AG04449 (cell line): ENCODE measurements at regions of chr1 and their contacts with region 1.

Region 1: DNA sequence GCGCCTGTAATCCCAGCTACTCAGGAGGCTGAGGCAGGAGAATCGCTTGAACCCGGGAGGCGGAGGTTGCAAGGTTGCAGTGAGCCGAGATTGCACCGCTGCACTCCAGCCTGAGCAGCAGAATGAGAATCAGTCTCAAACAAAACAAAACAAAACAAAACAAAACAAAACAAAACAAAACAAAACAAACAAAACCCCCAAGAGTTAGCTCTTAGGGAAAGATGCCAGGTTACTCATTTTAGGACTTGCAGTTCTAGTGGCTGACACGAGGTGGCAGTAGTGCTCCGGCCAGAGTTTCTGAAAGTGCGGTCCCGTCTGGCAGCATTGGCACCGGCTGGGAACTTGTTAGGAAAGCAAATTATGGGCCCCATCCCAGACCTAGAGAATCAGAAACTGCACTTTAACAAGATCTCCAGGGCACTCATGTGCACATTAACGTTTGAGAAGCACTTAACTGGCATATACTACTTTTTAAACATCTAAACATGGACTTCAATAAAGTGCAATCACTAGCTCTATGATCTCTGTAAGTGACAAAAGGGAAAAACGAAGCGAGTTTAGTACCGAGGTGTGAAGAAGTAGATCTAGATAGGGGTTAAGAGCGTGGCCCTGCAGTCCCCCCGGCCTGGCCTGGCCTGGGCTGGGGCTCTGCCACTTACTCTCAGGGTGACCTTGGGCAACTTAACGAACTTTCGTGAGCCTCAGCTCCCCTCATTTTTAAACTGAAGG is 41.9 kb upstream of the TNFRSF1B start:
- DNase-seq: no peak
- H3K4me3 ChIP-seq: no peak overlapping the region
- CTCF ChIP-seq: peak; percentile 84

Region 2: DNA sequence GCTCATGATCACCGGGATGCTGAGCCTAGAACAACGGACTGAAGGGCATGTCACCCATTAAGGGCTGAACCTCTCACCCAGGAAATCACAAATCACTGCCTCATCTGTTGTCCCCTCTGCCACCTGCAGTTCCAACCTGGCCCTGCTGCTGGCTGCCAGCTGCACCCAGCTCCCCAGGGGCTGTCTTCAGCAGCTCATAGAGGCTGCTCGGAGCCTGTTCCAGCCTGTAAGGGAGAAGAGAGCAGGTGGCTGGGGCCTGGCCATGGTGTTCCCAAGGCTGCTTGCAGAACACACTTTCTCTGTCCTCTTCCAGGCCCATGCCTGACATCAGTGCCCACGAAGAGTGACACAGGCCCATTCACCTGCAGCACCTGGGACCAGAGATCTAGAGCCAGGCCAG is 690.4 kb before region 1 on chr1:
- CTCF ChIA-PET with region 1: no interaction called
- POLR2A ChIA-PET with region 1: no interaction called
- DNase-seq: no peak
- H3K4me3 ChIP-seq: no peak overlapping the region
- CTCF ChIP-seq: no peak

Region 3: DNA sequence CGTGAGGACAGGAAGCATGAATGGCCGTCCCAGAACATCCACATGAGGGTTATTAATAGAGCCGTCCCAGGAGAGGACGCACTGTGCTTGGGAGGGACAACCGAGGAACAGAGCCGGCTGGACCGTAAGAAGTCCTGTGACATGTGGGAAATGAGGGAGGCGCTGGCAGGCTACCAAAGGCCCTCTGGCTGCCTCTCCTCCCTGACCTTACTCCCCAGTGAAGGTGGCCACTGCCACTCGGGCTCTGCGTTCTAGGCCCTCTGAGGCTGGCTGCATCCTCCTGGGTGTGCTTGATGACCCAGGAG is 250.6 kb before region 1 on chr1:
- CTCF ChIA-PET with region 1: no interaction called
- POLR2A ChIA-PET with region 1: no interaction called
- DNase-seq: no peak
- H3K4me3 ChIP-seq: no peak overlapping the region
- CTCF ChIP-seq: no peak

Region 4: DNA sequence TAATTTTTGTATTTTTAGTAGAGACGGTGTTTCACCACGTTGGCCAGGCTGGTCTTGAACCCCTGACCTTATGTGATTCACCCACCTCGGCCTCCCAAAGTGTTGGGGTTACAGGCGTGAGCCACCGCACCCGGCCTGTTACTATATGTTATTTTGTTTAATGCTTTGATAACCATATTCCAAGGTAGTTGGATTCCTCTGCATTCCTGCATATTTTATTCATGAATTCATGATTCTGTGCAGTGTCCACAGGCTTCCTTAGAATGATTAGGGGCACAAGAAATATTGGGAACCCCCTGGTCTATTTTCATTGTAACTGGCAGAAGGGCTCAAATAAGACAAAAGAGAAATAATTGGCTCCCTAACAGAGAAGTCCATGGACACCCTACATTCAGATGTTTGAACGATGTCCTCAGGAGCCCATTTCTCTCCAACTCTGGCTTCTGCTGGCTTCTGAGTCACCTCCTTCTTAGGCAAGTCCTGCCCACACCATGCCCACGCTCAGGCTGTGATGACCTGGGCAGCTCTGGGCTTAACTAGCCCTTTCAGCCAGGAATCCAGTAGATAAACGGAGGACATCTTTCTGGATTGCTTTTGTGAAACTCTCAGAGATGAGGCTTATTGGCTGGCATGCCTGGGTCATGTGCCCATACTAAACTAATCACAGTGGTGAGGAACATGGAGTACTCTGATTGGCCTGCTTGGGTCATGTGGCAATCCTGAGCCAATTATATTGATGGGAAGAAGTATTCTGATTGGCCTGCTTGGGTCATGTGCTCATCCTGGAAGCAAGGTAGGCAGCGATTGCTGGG is 29.2 kb before region 1 on chr1:
- CTCF ChIA-PET with region 1: interaction called, 15 read pairs
- POLR2A ChIA-PET with region 1: no interaction called
- DNase-seq: no peak
- H3K4me3 ChIP-seq: no peak overlapping the region
- CTCF ChIP-seq: no peak

Region 5: DNA sequence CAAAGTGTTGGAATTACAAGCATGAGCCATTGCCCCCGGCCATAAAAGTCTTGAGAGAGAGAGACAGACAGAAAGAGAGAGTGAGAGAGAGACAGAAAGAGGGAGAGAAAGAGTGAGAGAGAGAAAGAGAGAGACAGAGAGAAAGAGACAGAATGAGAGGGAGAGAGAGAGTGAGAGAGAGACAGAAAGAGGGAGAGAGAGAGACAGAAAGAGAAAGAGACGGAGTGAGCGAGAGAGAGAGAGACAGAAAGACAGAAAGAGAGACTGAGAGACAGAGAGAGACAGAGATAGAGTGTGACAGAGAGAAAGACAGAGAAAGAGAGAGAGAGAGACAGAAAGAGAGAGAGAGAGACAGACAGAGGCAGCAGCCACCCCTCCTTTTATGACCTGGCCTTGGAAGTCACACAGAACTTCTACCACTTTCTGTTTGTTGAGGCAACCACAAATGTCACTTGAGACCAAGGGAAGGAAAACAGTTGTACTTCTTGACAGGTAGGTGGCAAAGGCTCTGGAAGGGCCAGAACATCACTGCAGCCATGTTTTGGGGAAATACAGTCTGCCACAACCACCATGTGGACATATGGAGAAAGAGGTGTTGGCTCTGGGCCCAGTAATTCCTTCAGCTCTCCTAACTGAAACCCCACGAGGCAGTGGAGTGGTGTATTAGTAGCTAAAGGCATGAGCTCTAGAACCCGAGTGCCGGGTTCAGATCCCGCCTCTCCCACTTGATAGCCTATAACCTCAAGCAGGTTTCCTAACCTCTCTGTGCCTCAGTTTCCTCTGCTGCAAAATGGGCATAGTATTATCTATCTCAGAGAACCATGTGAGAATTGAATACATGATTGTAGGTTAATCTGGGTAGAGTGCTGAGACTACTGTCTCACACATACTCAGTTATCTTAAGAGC is 11.2 kb before region 1 on chr1:
- CTCF ChIA-PET with region 1: interaction called, 33 read pairs
- POLR2A ChIA-PET with region 1: no interaction called
- DNase-seq: no peak
- H3K4me3 ChIP-seq: no peak overlapping the region
- CTCF ChIP-seq: no peak

Region 6: GRCh38 chr1:12153181-12153785 is 28.4 kb after region 1 on chr1:
- CTCF ChIA-PET with region 1: interaction called, 31 read pairs
- POLR2A ChIA-PET with region 1: no interaction called
- DNase-seq: peak; percentile 52
- H3K4me3 ChIP-seq: no peak overlapping the region
- CTCF ChIP-seq: no peak

Region 7: DNA sequence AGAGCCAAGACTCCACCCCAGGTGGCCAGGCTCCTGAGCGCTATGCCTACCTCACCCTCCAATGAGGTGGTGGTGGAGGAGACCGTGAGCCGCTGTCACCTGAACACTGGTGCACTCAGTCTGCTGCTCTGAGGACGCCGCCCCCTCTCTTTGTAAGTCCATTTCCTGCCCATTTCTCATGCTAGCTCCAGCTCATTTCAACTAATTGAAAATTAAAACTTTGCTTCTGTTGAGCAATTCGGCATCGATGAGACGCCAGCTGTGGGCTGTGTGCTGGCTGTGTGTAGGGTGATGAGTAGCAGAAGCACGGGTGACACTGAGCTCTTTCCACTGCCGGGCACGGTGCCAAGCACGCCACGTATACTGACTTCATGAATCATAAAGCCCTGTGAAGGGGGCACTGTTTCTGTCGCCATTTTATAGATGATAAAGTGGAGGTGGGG is 53.2 kb after region 1 on chr1:
- CTCF ChIA-PET with region 1: interaction called, 30 read pairs
- POLR2A ChIA-PET with region 1: no interaction called
- DNase-seq: peak; percentile 49
- H3K4me3 ChIP-seq: no peak overlapping the region
- CTCF ChIP-seq: no peak

Region 8: GRCh38 chr1:12208764-12209494 is 84.1 kb after region 1 on chr1:
- CTCF ChIA-PET with region 1: interaction called, 730 read pairs
- POLR2A ChIA-PET with region 1: no interaction called
- DNase-seq: no peak
- H3K4me3 ChIP-seq: no peak overlapping the region
- CTCF ChIP-seq: peak; percentile 91

Region 9: DNA sequence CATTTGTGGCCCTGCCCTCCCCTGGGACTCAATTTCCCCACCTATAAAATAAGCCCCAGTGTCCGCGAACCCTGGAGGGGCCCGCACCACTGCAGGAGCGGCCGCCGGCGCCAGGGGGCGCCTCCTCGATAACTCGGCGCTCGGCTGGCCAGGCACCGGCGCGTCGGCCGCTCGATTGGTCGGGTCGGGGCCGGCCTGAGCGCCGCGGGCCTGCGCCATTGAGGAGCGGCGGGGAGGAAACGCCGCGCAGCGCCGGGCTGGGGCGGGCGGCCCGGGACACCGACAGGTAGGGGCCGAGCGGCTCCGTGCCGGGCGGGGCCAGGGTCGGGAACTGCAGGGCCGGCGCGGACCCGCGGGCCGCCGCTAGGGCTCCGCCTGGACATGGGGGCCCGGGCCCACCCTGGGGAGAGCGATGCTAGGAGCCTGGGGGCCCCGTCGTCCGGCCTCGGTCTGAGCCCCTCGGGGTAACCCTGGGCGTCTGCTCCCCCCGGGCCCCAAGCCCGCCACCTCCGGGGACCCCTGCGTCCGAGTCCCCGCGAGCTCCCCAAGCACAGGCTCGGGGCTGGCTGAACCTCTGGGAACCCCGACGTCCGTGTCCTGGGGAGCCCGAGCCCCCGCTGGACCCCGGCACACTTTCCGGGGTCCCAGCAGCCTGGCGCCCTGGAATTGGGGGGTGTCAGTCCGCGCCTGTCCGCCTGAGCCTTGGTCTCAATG is 105.1 kb after region 1 on chr1 and contains the start of gene VPS13D:
- CTCF ChIA-PET with region 1: interaction called, 35 read pairs
- POLR2A ChIA-PET with region 1: no interaction called
- DNase-seq: no peak
- H3K4me3 ChIP-seq: peak within 1 kb of the TSS; percentile 81
- CTCF ChIP-seq: peak; percentile 87

Region 10: DNA sequence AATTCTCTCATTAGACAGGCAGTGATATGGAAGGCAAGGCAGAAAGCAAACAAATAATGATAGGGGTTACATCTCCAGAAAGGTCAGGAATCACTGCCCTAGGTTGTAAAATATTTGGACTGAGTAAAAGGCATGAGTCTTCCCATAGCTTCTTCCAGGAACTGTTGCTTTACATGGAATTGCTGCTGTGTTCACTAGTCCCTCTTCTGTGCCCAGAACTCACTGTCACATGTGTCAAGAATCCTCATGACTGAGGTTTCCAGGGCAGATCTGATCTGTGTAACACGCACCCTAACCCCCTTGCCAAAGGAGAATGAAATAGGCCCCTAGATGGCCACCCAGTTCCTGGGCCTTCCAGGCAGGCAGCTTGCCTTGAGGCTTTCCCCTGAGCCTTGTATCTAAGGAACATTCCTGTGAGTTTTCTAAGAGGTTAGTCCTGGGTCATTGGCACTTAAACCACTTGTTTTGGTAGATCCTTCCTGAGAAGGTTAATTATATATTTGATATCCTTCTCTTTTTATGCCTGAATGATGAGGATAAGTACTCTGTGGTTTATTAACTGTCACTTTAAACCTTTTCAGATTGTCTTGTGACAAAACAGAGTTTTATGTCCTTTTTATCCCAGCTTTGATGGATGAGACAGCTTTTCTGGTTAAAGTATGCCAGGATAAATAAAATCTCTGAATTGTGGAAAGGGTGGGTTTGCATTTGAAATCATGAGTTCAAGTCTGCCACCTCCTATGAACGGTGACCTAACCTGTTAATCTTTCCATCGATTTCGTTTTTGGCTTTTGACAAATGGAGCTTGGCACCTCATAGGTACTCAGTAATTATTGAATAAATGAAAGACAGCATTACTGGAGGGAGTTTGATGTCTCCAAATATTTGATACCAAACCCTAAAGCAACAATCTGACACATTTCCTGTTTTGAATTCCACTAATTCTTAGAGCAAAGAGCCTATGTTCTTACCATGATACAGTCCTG is 329.8 kb after region 1 on chr1:
- CTCF ChIA-PET with region 1: no interaction called
- POLR2A ChIA-PET with region 1: no interaction called
- DNase-seq: no peak
- H3K4me3 ChIP-seq: no peak overlapping the region
- CTCF ChIP-seq: peak; percentile 13

Region 11: GRCh38 chr1:12636098-12636950 is 511.5 kb after region 1 on chr1:
- CTCF ChIA-PET with region 1: no interaction called
- POLR2A ChIA-PET with region 1: no interaction called
- DNase-seq: no peak
- H3K4me3 ChIP-seq: no peak overlapping the region
- CTCF ChIP-seq: no peak